ENCODE measurements at regions of chr16 and their contacts with region 1.

Region 1: GRCh38 chr16:700684-701584 is 4.7 kb downstream of the FBXL16 start:
- DNase-seq: peak in 1 of 2 experiments; percentile 92
- H3K4me3 ChIP-seq: peak overlapping the region in 1 of 4 experiments; percentile 33; a peak in 2 of 8 replicates
- H3K27ac ChIP-seq: no peak overlapping the region
- H3K4me1 ChIP-seq: peaks cover 0 to 6% (median 1%) of the 10 kb centered on the region in 4 experiments; a peak in 3 of 7 replicates
- H3K27me3 ChIP-seq: peaks cover 45 to 80% (median 72%) of the 10 kb centered on the region in 4 experiments
- CTCF ChIP-seq: 0 out of 4 replicates have a peak, but pooled peaks of 1 of the 3 experiments have one; percentile 3
- EP300 ChIP-seq: no peak
- POLR2A ChIP-seq: no peak
- RAD21 ChIP-seq: peak in 1 of 2 experiments; percentile 1; a peak in 1 of 4 replicates

Region 2: DNA sequence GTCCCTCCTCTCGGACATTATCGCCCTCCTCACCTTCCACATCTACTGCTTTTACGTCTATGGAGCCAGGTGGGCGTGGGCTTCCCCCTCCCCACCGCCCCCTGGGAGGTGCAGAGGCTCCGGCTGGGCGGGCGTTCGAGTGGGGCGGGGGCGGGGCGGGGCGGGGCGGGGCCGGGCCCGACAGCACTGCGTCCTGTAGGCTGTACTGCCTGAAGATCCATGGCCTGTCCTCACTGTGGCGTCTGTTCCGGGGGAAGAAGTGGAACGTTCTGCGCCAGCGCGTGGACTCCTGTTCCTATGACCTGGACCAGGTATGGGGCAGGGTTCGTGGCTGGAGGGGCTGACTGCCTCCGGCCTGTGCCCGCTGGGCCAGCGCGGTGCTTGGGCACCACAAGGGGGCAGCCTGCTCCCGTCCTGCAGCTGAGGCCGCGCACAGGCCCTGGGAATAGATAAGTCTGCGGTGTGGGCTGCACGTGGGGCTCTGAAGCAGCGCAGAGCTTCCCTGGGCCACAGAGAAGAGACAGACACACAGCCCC is 122.0 kb before region 1 on chr16:
- CTCF ChIA-PET with region 1: no interaction called
- POLR2A ChIA-PET with region 1: no interaction called
- DNase-seq: peak; percentile 64 to 94
- H3K4me3 ChIP-seq: peak overlapping the region in 3 of 4 experiments; percentile 18 to 47 (median 29); a peak in 5 of 8 replicates
- H3K27ac ChIP-seq: no peak overlapping the region
- H3K4me1 ChIP-seq: peaks cover 0 to 16% (median 12%) of the 10 kb centered on the region in 4 experiments; a peak in 6 of 7 replicates
- H3K27me3 ChIP-seq: peaks cover 0 to 2% (median 0%) of the 10 kb centered on the region in 4 experiments; a peak in 2 of 7 replicates
- CTCF ChIP-seq: peak in 2 of 3 experiments; percentile 90 to 96; a peak in 3 of 4 replicates
- EP300 ChIP-seq: no peak
- POLR2A ChIP-seq: no peak
- RAD21 ChIP-seq: peak; percentile 83 to 86

Region 3: GRCh38 chr16:689175-689901 is 11.6 kb before region 1 on chr16:
- CTCF ChIA-PET with region 1: interaction called, 15 read pairs
- POLR2A ChIA-PET with region 1: interaction called, 48 read pairs
- DNase-seq: no peak
- H3K4me3 ChIP-seq: peak overlapping the region; percentile 76 to 90 (median 82)
- H3K27ac ChIP-seq: no peak overlapping the region
- H3K4me1 ChIP-seq: peaks cover 0 to 16% (median 7%) of the 10 kb centered on the region in 4 experiments; a peak in 5 of 7 replicates
- H3K27me3 ChIP-seq: peaks cover 0 to 29% (median 13%) of the 10 kb centered on the region in 4 experiments; a peak in 5 of 7 replicates
- CTCF ChIP-seq: no peak
- EP300 ChIP-seq: no peak
- POLR2A ChIP-seq: no peak
- RAD21 ChIP-seq: no peak